HCT116 (cell line): ENCODE measurements at regions of chr10 and their contacts with region 1.

Region 1: GRCh38 chr10:102583435-102584417 is 60.6 kb upstream of the TRIM8 start:
- DNase-seq: peak; percentile 87
- ATAC-seq: peak; percentile 100
- H3K4me3 ChIP-seq: no peak overlapping the region
- H3K27ac ChIP-seq: no peak overlapping the region
- H3K4me1 ChIP-seq: peaks cover 0 to 3% of the 10 kb centered on the region in 2 experiments; a peak in 1 of 4 replicates
- H3K27me3 ChIP-seq: no peaks in the 10 kb centered on the region
- CTCF ChIP-seq: peak; percentile 85 to 98 (median 96)
- POLR2A ChIP-seq: no peak
- RAD21 ChIP-seq: peak; percentile 97

Region 2: GRCh38 chr10:102384053-102384452 is 199.7 kb before region 1 on chr10:
- CTCF ChIA-PET with region 1: interaction called, 12 read pairs
- POLR2A ChIA-PET with region 1: no interaction called
- RAD21 ChIA-PET with region 1: interaction called in 1 of 2 experiments, 3 read pairs
- intact Hi-C with region 1: no loop called
- DNase-seq: no peak
- ATAC-seq: peak; percentile 74
- H3K4me3 ChIP-seq: no peak overlapping the region
- H3K27ac ChIP-seq: no peak overlapping the region
- H3K4me1 ChIP-seq: no peaks in the 10 kb centered on the region
- H3K27me3 ChIP-seq: no peaks in the 10 kb centered on the region
- CTCF ChIP-seq: peak; percentile 34 to 61 (median 45); a peak in 5 of 6 replicates
- POLR2A ChIP-seq: no peak
- RAD21 ChIP-seq: peak; percentile 46

Region 3: GRCh38 chr10:102399217-102400089 is 184.3 kb before region 1 on chr10:
- CTCF ChIA-PET with region 1: interaction called, 33 read pairs
- POLR2A ChIA-PET with region 1: no interaction called
- RAD21 ChIA-PET with region 1: no interaction called
- intact Hi-C with region 1: loop called (anchors 2 kb)
- DNase-seq: peak; percentile 80
- ATAC-seq: peak; percentile 75
- H3K4me3 ChIP-seq: peak overlapping the region; percentile 45 to 63
- H3K27ac ChIP-seq: peak overlapping the region; percentile 52
- H3K4me1 ChIP-seq: peaks cover 21 to 73% of the 10 kb centered on the region in 2 experiments
- H3K27me3 ChIP-seq: no peaks in the 10 kb centered on the region
- CTCF ChIP-seq: peak in 2 of 3 experiments; percentile 97 to 99; a peak in 4 of 6 replicates
- POLR2A ChIP-seq: peak; percentile 67
- RAD21 ChIP-seq: no peak

Region 4: DNA sequence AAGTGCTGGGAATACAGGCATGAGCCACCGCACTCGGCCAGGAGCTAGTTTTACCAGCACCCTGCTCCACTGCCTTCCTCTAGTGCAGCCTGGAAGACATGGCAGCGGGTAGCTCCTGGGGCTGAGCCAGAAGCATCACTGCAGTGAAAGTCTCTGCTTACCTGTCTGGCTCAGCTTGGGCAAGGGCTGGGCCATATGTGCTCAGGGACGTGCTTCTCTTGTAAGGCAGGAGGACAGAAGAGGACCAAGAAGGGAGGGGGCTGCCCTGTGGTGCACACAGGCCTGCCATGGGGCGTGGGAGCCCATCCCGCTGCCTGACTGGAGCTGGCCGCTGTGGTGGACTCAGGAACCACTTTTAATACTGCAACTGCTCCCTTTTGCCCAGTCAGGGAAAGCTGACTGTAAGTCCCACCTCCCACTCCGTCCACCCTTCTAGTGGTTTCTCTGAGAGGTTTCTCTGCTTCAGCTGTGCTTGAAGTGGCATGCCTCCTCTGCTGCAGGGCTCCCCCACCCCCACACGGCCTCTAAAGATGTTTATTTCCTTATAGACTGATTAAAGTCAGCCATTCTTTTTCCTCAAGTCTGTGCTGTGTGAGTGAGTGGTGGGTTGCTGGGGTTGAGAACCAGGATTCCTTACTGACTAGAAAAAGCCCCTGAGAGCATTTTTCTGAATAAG is 107.1 kb before region 1 on chr10:
- CTCF ChIA-PET with region 1: interaction called, 25 read pairs
- POLR2A ChIA-PET with region 1: no interaction called
- RAD21 ChIA-PET with region 1: interaction called in 1 of 2 experiments, 5 read pairs
- intact Hi-C with region 1: no loop called
- DNase-seq: no peak
- ATAC-seq: no peak
- H3K4me3 ChIP-seq: no peak overlapping the region
- H3K27ac ChIP-seq: no peak overlapping the region
- H3K4me1 ChIP-seq: no peaks in the 10 kb centered on the region
- H3K27me3 ChIP-seq: no peaks in the 10 kb centered on the region
- CTCF ChIP-seq: no peak
- POLR2A ChIP-seq: no peak
- RAD21 ChIP-seq: no peak

Region 5: GRCh38 chr10:102509387-102509786 is 74.3 kb before region 1 on chr10:
- CTCF ChIA-PET with region 1: interaction called, 103 read pairs
- POLR2A ChIA-PET with region 1: no interaction called
- RAD21 ChIA-PET with region 1: interaction called in 1 of 2 experiments, 10 read pairs
- intact Hi-C with region 1: no loop called
- DNase-seq: no peak
- ATAC-seq: no peak
- H3K4me3 ChIP-seq: no peak overlapping the region
- H3K27ac ChIP-seq: no peak overlapping the region
- H3K4me1 ChIP-seq: peaks cover 5 to 8% of the 10 kb centered on the region in 2 experiments; a peak in 3 of 4 replicates
- H3K27me3 ChIP-seq: no peaks in the 10 kb centered on the region
- CTCF ChIP-seq: no peak
- POLR2A ChIP-seq: no peak
- RAD21 ChIP-seq: no peak

Region 6: DNA sequence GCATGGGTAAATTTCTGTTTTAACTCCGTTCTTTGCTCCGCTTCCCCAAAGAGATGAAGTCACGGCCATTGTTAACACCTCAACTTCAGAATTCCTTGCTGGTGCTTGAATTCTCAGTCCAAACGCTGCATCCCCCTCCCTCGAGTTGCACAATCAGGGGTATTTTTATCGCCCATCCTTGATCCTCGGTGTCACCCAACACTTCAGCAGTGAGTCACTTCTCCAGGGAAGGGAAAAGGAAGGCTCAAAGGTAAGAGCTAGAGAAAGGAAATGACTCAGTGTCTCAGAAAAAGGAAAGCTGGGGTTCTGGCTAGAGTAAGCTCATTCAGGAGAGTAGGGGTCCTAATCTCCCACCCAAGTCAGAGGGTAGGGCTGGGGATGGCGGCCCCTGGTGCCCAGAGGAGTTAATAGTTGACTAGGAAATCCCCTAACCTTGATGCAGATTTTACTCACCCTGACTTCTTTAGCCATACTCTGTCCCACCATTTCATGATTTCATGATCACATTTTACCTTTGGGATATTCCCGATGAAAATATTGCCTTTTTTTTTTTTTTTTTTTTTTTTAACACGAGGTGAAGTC is 20.7 kb after region 1 on chr10:
- CTCF ChIA-PET with region 1: interaction called, 10 read pairs
- POLR2A ChIA-PET with region 1: no interaction called
- RAD21 ChIA-PET with region 1: interaction called in 1 of 2 experiments, 3 read pairs
- intact Hi-C with region 1: no loop called
- DNase-seq: peak; percentile 86
- ATAC-seq: peak; percentile 79
- H3K4me3 ChIP-seq: peak overlapping the region; percentile 15 to 43
- H3K27ac ChIP-seq: peak overlapping the region; percentile 92
- H3K4me1 ChIP-seq: peaks cover 58 to 76% of the 10 kb centered on the region in 2 experiments
- H3K27me3 ChIP-seq: no peaks in the 10 kb centered on the region
- CTCF ChIP-seq: no peak
- POLR2A ChIP-seq: no peak
- RAD21 ChIP-seq: no peak

Region 7: GRCh38 chr10:102927311-102928010 is 343.7 kb after region 1 on chr10:
- CTCF ChIA-PET with region 1: no interaction called
- POLR2A ChIA-PET with region 1: no interaction called
- RAD21 ChIA-PET with region 1: no interaction called
- intact Hi-C with region 1: no loop called
- DNase-seq: no peak
- ATAC-seq: no peak
- H3K4me3 ChIP-seq: no peak overlapping the region
- H3K27ac ChIP-seq: no peak overlapping the region
- H3K4me1 ChIP-seq: no peaks in the 10 kb centered on the region
- H3K27me3 ChIP-seq: no peaks in the 10 kb centered on the region
- CTCF ChIP-seq: no peak
- POLR2A ChIP-seq: no peak
- RAD21 ChIP-seq: no peak